ENCODE measurements at regions of chr11 and their contacts with region 1.

Region 1: DNA sequence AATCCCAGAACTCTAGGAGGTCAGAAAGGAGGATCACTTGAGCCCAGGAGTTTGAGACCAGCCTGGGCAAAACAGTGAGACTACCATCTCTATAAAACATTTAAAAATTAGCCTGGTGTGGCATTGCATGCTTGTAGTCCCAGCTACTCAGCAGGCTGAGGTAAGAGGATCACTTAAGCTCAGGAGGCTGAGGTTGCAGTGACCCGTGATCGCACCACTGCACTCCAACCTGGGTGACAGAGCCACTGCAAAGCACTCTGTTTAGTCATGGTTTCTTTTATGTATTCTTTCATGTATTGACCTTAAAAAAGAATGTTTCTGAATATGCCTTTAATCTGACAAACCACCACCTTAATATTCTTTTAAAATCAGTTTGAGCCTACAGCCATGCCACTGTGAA is 52.2 kb downstream of the BIRC2 start:
- DNase-seq: no peak
- H3K4me3 ChIP-seq: no peak overlapping the region
- H3K27ac ChIP-seq: no peak overlapping the region
- H3K4me1 ChIP-seq: peaks cover 0 to 3% (median 1%) of the 10 kb centered on the region in 4 donors
- H3K27me3 ChIP-seq: no peaks in the 10 kb centered on the region
- CTCF ChIP-seq: no peak
- EP300 ChIP-seq: no peak
- POLR2A ChIP-seq: no peak

Region 2: GRCh38 chr11:102225689-102226568 is 173.3 kb before region 1 on chr11:
- in situ Hi-C with region 1: no loop called
- intact Hi-C with region 1: no loop called
- DNase-seq: no peak
- H3K4me3 ChIP-seq: no peak overlapping the region
- H3K27ac ChIP-seq: peak overlapping the region in 2 of 4 donors; percentile 3 to 19
- H3K4me1 ChIP-seq: peaks cover 0 to 29% (median 14%) of the 10 kb centered on the region in 4 donors
- H3K27me3 ChIP-seq: no peaks in the 10 kb centered on the region
- CTCF ChIP-seq: no peak
- EP300 ChIP-seq: no peak
- POLR2A ChIP-seq: no peak

Region 3: DNA sequence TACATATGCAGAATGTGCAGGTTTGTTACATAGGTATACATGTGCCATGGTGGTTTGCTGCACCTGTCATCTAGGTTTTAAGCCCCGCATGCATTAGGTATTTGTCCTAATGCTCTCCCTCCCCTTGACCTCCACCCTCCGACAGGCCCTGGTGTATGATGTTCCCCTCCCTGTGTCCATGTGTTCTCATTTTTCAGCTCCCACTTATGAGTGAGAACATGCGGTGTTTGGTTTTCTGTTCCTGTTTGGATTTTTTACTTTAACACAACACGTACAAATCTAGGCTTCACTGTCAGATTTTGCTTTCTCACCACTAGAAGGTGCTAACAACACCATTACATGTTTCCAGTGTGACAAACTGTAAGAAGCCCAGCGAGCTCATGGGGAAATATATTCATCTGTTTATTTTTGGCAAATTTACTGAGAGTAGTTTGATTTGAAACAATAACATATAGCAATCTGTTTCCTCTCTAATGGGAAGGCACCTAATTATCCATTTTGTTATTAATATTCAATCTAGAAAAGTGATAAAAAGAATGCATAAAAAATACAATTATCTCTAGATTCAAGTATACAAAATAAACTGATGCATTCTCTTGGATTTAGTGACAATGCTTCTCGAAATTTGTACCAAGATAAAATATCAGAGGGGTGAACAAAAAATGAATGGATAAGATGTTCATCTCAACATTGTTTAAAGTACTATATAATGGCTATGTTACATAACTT is 105.2 kb before region 1 on chr11:
- in situ Hi-C with region 1: no loop called
- intact Hi-C with region 1: no loop called
- DNase-seq: no peak
- H3K4me3 ChIP-seq: no peak overlapping the region
- H3K27ac ChIP-seq: no peak overlapping the region
- H3K4me1 ChIP-seq: peaks cover 0 to 7% (median 0%) of the 10 kb centered on the region in 4 donors
- H3K27me3 ChIP-seq: no peaks in the 10 kb centered on the region
- CTCF ChIP-seq: peak; percentile 66 to 82 (median 71)
- EP300 ChIP-seq: no peak
- POLR2A ChIP-seq: no peak

Region 4: DNA sequence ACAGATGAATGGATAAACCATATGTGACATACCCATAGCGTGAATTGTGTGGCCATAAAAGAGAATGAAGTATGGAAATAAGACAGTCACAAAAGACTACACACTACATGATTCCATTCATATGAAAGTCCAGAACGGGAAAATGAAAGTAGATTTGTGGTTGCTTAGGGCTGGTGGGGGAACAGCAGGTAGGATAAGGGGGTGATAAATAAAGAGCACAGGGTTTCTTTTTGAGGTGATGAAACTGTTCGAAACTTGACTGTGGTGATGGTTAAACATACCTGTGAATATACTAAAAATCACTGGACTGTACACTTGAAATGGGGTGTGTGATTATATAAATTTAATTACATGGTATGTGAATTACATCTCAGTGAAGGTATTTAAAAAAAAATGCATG is 36.5 kb after region 1 on chr11:
- in situ Hi-C with region 1: loop called in 1 of 4 experiments (anchors 10 kb)
- intact Hi-C with region 1: loop called (anchors 1 kb)
- DNase-seq: no peak
- H3K4me3 ChIP-seq: no peak overlapping the region
- H3K27ac ChIP-seq: no peak overlapping the region
- H3K4me1 ChIP-seq: peaks cover 3 to 22% (median 11%) of the 10 kb centered on the region in 4 donors
- H3K27me3 ChIP-seq: no peaks in the 10 kb centered on the region
- CTCF ChIP-seq: no peak
- EP300 ChIP-seq: no peak
- POLR2A ChIP-seq: no peak

Region 5: GRCh38 chr11:102464859-102465500 is 65.8 kb after region 1 on chr11:
- in situ Hi-C with region 1: no loop called
- intact Hi-C with region 1: no loop called
- DNase-seq: no peak
- H3K4me3 ChIP-seq: no peak overlapping the region
- H3K27ac ChIP-seq: no peak overlapping the region
- H3K4me1 ChIP-seq: peaks cover 21 to 55% (median 29%) of the 10 kb centered on the region in 4 donors
- H3K27me3 ChIP-seq: no peaks in the 10 kb centered on the region
- CTCF ChIP-seq: no peak
- EP300 ChIP-seq: no peak
- POLR2A ChIP-seq: no peak

Region 6: GRCh38 chr11:102971766-102972165 is 572.6 kb after region 1 on chr11:
- in situ Hi-C with region 1: no loop called
- intact Hi-C with region 1: no loop called
- DNase-seq: no peak
- H3K4me3 ChIP-seq: no peak overlapping the region
- H3K27ac ChIP-seq: no peak overlapping the region
- H3K4me1 ChIP-seq: no peaks in the 10 kb centered on the region
- H3K27me3 ChIP-seq: no peaks in the 10 kb centered on the region
- CTCF ChIP-seq: no peak
- EP300 ChIP-seq: no peak
- POLR2A ChIP-seq: no peak